Activated CD4-positive, alpha-beta T cell treated with anti-CD3 and anti-CD28 coated beads, Interleukin-2, amount 10 ng/mL, durations not matched to agents 24 days and 14 days (primary cell): ENCODE measurements at regions of chr16 and their contacts with region 1.

Region 1: DNA sequence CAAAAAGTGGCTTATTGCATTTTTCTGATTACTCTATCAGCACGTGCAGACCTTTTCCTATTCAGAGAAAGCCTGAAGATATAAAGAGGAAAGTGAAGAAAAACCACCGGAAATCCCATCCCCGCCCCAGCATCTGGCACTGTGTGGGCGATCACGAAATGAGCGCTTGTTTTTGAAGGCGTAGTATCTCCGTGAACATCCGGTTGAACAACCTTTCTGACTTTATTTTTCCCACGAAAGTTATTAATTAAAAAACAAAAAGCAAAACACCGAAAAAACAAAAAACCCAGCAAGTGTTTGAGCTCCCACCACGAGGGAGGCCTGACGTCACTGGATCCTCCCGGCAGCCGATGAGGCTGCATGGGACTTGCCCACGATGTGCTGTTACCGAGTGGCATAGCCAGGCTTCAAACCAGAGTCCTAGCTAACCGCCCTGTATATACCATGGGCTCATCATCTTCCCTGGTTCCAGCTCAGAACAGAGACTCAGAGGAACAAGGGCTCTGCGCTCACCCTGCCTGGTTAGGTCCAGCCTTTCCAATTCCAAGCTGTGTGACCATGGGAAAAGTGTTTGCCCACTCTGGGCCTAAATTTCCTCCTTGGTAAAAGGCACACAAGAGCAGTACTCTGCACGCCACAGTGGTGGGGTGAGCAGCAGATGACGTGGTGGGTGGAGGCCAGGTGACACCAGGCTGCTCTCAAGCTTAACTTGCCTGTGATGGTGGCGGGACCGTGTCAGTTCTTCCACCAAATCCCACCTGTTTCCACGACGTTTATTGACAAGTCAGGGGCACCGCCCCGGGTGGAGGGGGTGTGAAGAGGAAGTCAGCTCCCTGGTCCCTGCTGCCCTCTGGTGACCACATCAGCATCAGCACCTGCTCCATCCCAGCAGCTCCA is 34.3 kb upstream of the IL21R start:
- DNase-seq: peak; percentile 94
- H3K4me3 Mint-ChIP-seq: peak overlapping the region; percentile 69
- H3K27ac Mint-ChIP-seq: peak overlapping the region; percentile 99
- H3K4me1 Mint-ChIP-seq: peaks cover 52% of the 10 kb centered on the region
- H3K27me3 Mint-ChIP-seq: no peaks in the 10 kb centered on the region

Region 2: DNA sequence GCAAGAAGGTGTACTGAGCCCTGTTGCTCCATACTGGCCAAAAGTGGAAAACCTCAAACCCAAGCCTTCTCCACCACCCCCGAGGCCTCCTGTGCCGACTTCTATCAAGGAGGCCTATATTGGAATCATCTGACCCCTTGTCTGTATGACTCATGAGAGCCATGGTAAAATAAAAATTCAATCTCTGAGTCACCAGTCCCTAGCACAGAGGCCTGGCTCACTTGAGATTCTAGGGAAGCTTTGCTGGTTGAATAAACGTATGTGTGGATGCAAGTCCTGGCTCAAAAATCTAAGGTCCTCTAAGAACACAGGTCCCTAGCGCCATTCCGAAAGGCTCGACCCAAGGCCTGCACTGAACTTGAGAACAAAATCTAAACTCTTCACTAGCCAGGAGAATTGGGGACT is 114.2 kb before region 1 on chr16:
- intact Hi-C with region 1: loop called (anchors 1 kb)
- DNase-seq: no peak
- H3K4me3 Mint-ChIP-seq: peak overlapping the region; percentile 74
- H3K27ac Mint-ChIP-seq: peak overlapping the region; percentile 96
- H3K4me1 Mint-ChIP-seq: peaks cover 83% of the 10 kb centered on the region
- H3K27me3 Mint-ChIP-seq: no peaks in the 10 kb centered on the region

Region 3: GRCh38 chr16:27313422-27314160 is 54.1 kb before region 1 on chr16 and contains the start of gene IL4R:
- intact Hi-C with region 1: loop called (anchors 1 kb)
- DNase-seq: peak; percentile 93
- H3K4me3 Mint-ChIP-seq: peak within 1 kb of the TSS; percentile 100
- H3K27ac Mint-ChIP-seq: peak within 1 kb of the TSS; percentile 96
- H3K4me1 Mint-ChIP-seq: peaks cover 48% of the 10 kb centered on the region
- H3K27me3 Mint-ChIP-seq: no peaks in the 10 kb centered on the region
- total RNA-seq, gene IL4R: 345 and 375 TPM in 2 replicates

Region 4: GRCh38 chr16:27326738-27327585 is 40.7 kb before region 1 on chr16:
- intact Hi-C with region 1: loop called (anchors 2 kb)
- DNase-seq: peak; percentile 80
- H3K4me3 Mint-ChIP-seq: peak overlapping the region; percentile 75
- H3K27ac Mint-ChIP-seq: peak overlapping the region; percentile 95
- H3K4me1 Mint-ChIP-seq: peaks cover 73% of the 10 kb centered on the region
- H3K27me3 Mint-ChIP-seq: no peaks in the 10 kb centered on the region

Region 5: GRCh38 chr16:27389272-27389961 is 21.7 kb after region 1 on chr16:
- intact Hi-C with region 1: no loop called
- DNase-seq: no peak
- H3K4me3 Mint-ChIP-seq: no peak overlapping the region
- H3K27ac Mint-ChIP-seq: no peak overlapping the region
- H3K4me1 Mint-ChIP-seq: peaks cover 21% of the 10 kb centered on the region
- H3K27me3 Mint-ChIP-seq: no peaks in the 10 kb centered on the region

Region 6: GRCh38 chr16:27408012-27408601 is 40.4 kb after region 1 on chr16:
- intact Hi-C with region 1: loop called (anchors 1 kb)
- DNase-seq: peak; percentile 79
- H3K4me3 Mint-ChIP-seq: peak overlapping the region; percentile 100
- H3K27ac Mint-ChIP-seq: peak overlapping the region; percentile 98
- H3K4me1 Mint-ChIP-seq: peaks cover 62% of the 10 kb centered on the region
- H3K27me3 Mint-ChIP-seq: no peaks in the 10 kb centered on the region

Region 7: DNA sequence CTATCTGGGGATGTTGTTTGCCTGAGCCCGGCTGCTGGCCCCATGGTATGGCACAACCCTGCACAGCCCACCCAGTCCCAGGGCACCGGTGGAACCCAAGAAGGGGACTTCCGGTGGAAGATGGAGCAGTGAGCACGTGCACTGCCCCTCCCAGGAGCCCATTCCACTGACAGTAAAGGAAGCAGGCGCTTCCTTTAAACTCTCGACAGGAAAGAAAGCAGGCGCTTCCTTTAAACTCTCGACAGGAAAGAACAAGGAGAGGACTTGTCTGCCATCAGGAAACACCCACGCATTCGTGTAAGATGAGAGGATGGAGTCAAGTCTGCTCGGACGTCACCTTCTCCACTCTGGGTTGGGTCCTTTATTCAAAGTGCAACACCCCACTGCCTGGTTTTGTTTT is 88.0 kb after region 1 on chr16:
- intact Hi-C with region 1: loop called (anchors 2 kb)
- DNase-seq: peak; percentile 70
- H3K4me3 Mint-ChIP-seq: peak overlapping the region; percentile 27
- H3K27ac Mint-ChIP-seq: peak overlapping the region; percentile 76
- H3K4me1 Mint-ChIP-seq: peaks cover 46% of the 10 kb centered on the region
- H3K27me3 Mint-ChIP-seq: no peaks in the 10 kb centered on the region